ENCODE measurements at regions of chr17 and their contacts with region 1.

Region 1: DNA sequence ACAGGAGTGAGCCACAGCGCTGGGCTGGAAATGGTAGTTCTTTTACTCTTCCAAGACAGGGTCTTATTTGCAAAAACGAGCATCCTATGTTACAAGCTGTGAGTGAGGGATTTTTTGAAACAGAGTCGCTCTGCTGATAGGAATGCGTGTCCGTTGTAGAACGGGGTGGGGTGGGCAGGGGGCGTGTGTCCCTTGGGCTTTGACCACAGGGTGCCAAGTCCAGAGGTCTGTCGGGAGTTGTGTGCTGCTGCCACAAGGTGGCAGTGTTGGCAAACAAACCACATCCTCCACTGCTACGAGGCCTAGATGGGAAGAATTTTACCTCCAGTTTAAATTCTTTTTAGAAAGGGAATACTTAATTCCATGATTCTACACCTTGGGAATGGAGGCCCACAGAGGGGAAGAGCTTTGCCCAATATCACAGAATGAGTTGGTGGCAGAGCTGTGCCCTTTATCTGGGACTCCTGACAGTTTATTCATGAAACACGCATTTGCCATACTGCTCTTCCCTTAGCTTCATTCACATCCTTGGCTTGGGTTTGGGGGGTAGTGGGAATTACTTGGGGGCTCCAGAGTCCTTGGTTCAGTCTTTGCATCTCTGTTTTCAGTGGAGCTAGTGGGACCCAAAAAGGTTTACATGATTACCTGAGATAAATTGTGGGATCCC is 30.6 kb upstream of the ETV4 start:
- DNase-seq: peak; percentile 43 to 77 (median 51)
- H3K4me3 ChIP-seq: no peak overlapping the region
- H3K4me3 Mint-ChIP-seq: no peak overlapping the region
- H3K27ac ChIP-seq: no peak overlapping the region
- H3K27ac Mint-ChIP-seq: no peak overlapping the region
- H3K4me1 ChIP-seq: peaks cover 13% of the 10 kb centered on the region
- H3K4me1 Mint-ChIP-seq: peaks cover 9 to 15% (median 12%) of the 10 kb centered on the region in 3 donors
- H3K27me3 ChIP-seq: no peaks in the 10 kb centered on the region
- H3K27me3 Mint-ChIP-seq: peaks cover 0 to 9% of the 10 kb centered on the region in 2 donors

Region 2: GRCh38 chr17:43628089-43628650 is 51.5 kb after region 1 on chr17:
- CTCF ChIA-PET with region 1: no interaction called
- POLR2A ChIA-PET with region 1: no interaction called
- DNase-seq: no peak
- H3K4me3 ChIP-seq: no peak overlapping the region
- H3K4me3 Mint-ChIP-seq: no peak overlapping the region
- H3K27ac ChIP-seq: no peak overlapping the region
- H3K27ac Mint-ChIP-seq: no peak overlapping the region
- H3K4me1 ChIP-seq: no peaks in the 10 kb centered on the region
- H3K4me1 Mint-ChIP-seq: no peaks in the 10 kb centered on the region
- H3K27me3 ChIP-seq: no peaks in the 10 kb centered on the region
- H3K27me3 Mint-ChIP-seq: peaks cover 11 to 35% of the 10 kb centered on the region in 2 donors

Region 3: GRCh38 chr17:43673516-43674323 is 97.0 kb after region 1 on chr17:
- CTCF ChIA-PET with region 1: interaction called, 120 read pairs
- POLR2A ChIA-PET with region 1: no interaction called
- DNase-seq: peak; percentile 50 to 75 (median 61)
- H3K4me3 ChIP-seq: no peak overlapping the region
- H3K4me3 Mint-ChIP-seq: no peak overlapping the region
- H3K27ac ChIP-seq: no peak overlapping the region
- H3K27ac Mint-ChIP-seq: no peak overlapping the region
- H3K4me1 ChIP-seq: peaks cover 3% of the 10 kb centered on the region
- H3K4me1 Mint-ChIP-seq: peaks cover 9 to 16% (median 12%) of the 10 kb centered on the region in 3 donors
- H3K27me3 ChIP-seq: no peaks in the 10 kb centered on the region
- H3K27me3 Mint-ChIP-seq: peaks cover 2 to 6% of the 10 kb centered on the region in 2 donors

Region 4: GRCh38 chr17:43683928-43684653 is 107.4 kb after region 1 on chr17:
- CTCF ChIA-PET with region 1: interaction called, 23 read pairs
- POLR2A ChIA-PET with region 1: no interaction called
- DNase-seq: no peak
- H3K4me3 ChIP-seq: no peak overlapping the region
- H3K4me3 Mint-ChIP-seq: no peak overlapping the region
- H3K27ac ChIP-seq: no peak overlapping the region
- H3K27ac Mint-ChIP-seq: no peak overlapping the region
- H3K4me1 ChIP-seq: no peaks in the 10 kb centered on the region
- H3K4me1 Mint-ChIP-seq: no peaks in the 10 kb centered on the region
- H3K27me3 ChIP-seq: no peaks in the 10 kb centered on the region
- H3K27me3 Mint-ChIP-seq: peaks cover 1 to 11% of the 10 kb centered on the region in 2 donors

Region 5: GRCh38 chr17:43694077-43694870 is 117.6 kb after region 1 on chr17:
- CTCF ChIA-PET with region 1: interaction called, 10 read pairs
- POLR2A ChIA-PET with region 1: no interaction called
- DNase-seq: peak; percentile 56 to 84 (median 64)
- H3K4me3 ChIP-seq: no peak overlapping the region
- H3K4me3 Mint-ChIP-seq: no peak overlapping the region
- H3K27ac ChIP-seq: no peak overlapping the region
- H3K27ac Mint-ChIP-seq: no peak overlapping the region
- H3K4me1 ChIP-seq: no peaks in the 10 kb centered on the region
- H3K4me1 Mint-ChIP-seq: peaks cover 0 to 5% (median 0%) of the 10 kb centered on the region in 3 donors
- H3K27me3 ChIP-seq: no peaks in the 10 kb centered on the region
- H3K27me3 Mint-ChIP-seq: peaks cover 22 to 24% of the 10 kb centered on the region in 2 donors

Region 6: GRCh38 chr17:43766413-43767052 is 189.8 kb after region 1 on chr17:
- CTCF ChIA-PET with region 1: interaction called, 18 read pairs
- POLR2A ChIA-PET with region 1: no interaction called
- DNase-seq: peak in 3 of 5 donors; percentile 42 to 64 (median 45)
- H3K4me3 ChIP-seq: no peak overlapping the region
- H3K4me3 Mint-ChIP-seq: no peak overlapping the region
- H3K27ac ChIP-seq: no peak overlapping the region
- H3K27ac Mint-ChIP-seq: no peak overlapping the region
- H3K4me1 ChIP-seq: no peaks in the 10 kb centered on the region
- H3K4me1 Mint-ChIP-seq: no peaks in the 10 kb centered on the region
- H3K27me3 ChIP-seq: no peaks in the 10 kb centered on the region
- H3K27me3 Mint-ChIP-seq: peaks cover 0 to 9% of the 10 kb centered on the region in 2 donors